ENCODE measurements at regions of chr14 and their contacts with region 1.

Region 1: GRCh38 chr14:69501423-69501838 is 16.9 kb downstream of the PLEKHD1 start:
- DNase-seq: no peak
- ATAC-seq: no peak
- H3K4me3 Mint-ChIP-seq: no peak overlapping the region
- H3K27ac Mint-ChIP-seq: no peak overlapping the region
- H3K4me1 Mint-ChIP-seq: peaks cover 13% of the 10 kb centered on the region
- H3K27me3 Mint-ChIP-seq: peaks cover 18% of the 10 kb centered on the region
- CTCF ChIP-seq: no peak

Region 2: GRCh38 chr14:69408331-69408960 is 93.0 kb before region 1 on chr14:
- CTCF ChIA-PET with region 1: no interaction called
- POLR2A ChIA-PET with region 1: no interaction called
- DNase-seq: no peak
- ATAC-seq: no peak
- H3K4me3 Mint-ChIP-seq: no peak overlapping the region
- H3K27ac Mint-ChIP-seq: no peak overlapping the region
- H3K4me1 Mint-ChIP-seq: no peaks in the 10 kb centered on the region
- H3K27me3 Mint-ChIP-seq: no peaks in the 10 kb centered on the region
- CTCF ChIP-seq: no peak

Region 3: GRCh38 chr14:69441948-69442347 is 59.5 kb before region 1 on chr14:
- CTCF ChIA-PET with region 1: no interaction called
- POLR2A ChIA-PET with region 1: no interaction called
- DNase-seq: no peak
- ATAC-seq: no peak
- H3K4me3 Mint-ChIP-seq: no peak overlapping the region
- H3K27ac Mint-ChIP-seq: peak overlapping the region; percentile 38
- H3K4me1 Mint-ChIP-seq: peaks cover 20% of the 10 kb centered on the region
- H3K27me3 Mint-ChIP-seq: no peaks in the 10 kb centered on the region
- CTCF ChIP-seq: no peak

Region 4: DNA sequence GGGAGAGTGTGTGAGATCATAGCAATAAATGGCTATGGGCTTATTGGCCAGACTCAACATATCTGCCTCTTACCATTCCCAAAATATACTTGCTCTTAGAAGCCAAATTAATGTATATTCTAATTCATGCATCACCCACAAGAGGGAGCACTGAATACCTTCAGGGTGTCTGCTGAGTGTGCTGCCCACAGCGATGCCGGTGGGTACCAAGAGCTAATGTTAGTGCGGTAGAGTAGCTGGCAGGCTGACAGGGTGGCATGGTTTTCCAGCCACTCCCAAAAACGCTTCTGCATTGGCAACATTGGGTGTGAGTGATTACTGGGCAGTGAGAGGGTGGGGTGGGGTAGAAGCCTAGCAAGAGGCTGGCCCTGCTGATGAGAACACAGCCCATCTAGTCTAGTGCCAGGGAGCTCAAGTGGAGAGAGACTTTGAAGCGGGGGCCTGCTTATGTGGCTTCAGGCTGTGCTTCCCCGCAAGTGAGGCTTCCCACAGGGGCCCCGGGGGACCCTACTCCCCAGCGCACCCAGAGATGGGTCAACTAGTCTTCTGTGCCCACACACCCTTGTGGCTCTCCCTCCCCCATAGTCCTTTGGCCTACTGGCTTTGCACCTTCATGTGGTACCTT is 26.1 kb before region 1 on chr14:
- CTCF ChIA-PET with region 1: interaction called, 19 read pairs
- POLR2A ChIA-PET with region 1: no interaction called
- DNase-seq: no peak
- ATAC-seq: peak; percentile 78
- H3K4me3 Mint-ChIP-seq: no peak overlapping the region
- H3K27ac Mint-ChIP-seq: no peak overlapping the region
- H3K4me1 Mint-ChIP-seq: no peaks in the 10 kb centered on the region
- H3K27me3 Mint-ChIP-seq: peaks cover 3% of the 10 kb centered on the region
- CTCF ChIP-seq: no peak; the same call in 1 of the 2 replicates

Region 5: DNA sequence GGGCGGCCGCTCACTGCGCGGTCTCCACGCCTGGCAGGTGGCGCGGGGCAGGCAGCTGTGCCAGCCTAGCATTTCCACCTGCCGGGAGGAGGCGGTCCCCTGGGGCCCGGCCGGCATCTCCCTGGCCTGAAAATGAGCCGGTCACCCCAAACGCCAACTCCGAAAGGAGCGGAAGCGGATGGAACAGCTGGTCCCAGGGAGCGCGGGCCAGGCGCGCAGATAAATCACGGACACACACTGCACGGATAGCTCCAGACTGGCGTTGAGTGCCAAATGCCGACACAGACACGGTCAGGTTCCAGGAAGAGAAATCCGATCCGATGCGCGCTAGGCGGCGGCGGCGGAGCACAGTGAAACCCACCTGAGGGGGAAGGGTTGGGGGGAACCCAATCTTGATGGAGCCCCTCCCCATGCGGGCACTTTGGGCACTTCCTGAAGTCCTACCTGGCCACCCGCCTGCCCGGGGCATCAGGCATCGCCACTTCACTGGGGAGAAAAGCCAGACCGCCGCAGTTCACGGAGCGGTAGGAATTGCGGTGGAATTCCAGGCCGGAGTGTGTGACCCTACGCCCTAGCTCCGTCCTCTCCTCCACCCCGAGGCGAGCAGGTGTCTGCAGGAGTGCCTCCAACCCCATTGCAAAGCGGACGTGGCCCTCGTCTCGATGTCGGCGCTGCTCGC is 17.5 kb before region 1 on chr14:
- CTCF ChIA-PET with region 1: interaction called, 12 read pairs
- POLR2A ChIA-PET with region 1: interaction called, 3 read pairs
- DNase-seq: peak; percentile 64
- ATAC-seq: peak; percentile 61
- H3K4me3 Mint-ChIP-seq: peak overlapping the region; percentile 74
- H3K27ac Mint-ChIP-seq: no peak overlapping the region
- H3K4me1 Mint-ChIP-seq: peaks cover 17% of the 10 kb centered on the region
- H3K27me3 Mint-ChIP-seq: peaks cover 56% of the 10 kb centered on the region
- CTCF ChIP-seq: no peak

Region 6: GRCh38 chr14:69519204-69520100 is 18.0 kb after region 1 on chr14:
- CTCF ChIA-PET with region 1: interaction called, 15 read pairs
- POLR2A ChIA-PET with region 1: no interaction called
- DNase-seq: no peak
- ATAC-seq: peak; percentile 20; the same call in 1 of the 2 replicates
- H3K4me3 Mint-ChIP-seq: no peak overlapping the region
- H3K27ac Mint-ChIP-seq: 0 out of 2 replicates have a peak overlapping the region, but pooled peaks have one; percentile 4
- H3K4me1 Mint-ChIP-seq: peaks cover 23% of the 10 kb centered on the region
- H3K27me3 Mint-ChIP-seq: no peaks in the 10 kb centered on the region
- CTCF ChIP-seq: no peak

Region 7: DNA sequence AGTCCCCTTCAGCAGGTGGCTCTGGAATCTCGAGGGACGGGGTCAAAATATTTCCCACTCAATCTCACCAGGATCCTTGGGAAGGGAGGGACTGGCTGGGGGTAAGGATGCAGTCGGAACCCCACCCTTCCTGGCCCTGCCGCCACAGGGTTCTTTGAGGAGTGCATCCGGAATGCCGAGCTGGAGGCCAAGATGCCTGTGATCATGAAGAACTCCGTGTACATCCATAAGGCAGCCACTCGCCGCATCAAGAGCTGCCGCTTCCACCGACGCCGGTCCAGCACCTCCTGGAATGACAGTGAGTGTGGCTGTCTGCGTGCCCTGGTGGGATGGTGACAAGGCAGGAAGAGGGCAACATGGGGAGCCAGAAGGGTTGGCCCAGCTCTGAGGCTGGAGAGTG is 26.2 kb after region 1 on chr14:
- CTCF ChIA-PET with region 1: interaction called, 17 read pairs
- POLR2A ChIA-PET with region 1: no interaction called
- DNase-seq: no peak
- ATAC-seq: no peak
- H3K4me3 Mint-ChIP-seq: no peak overlapping the region
- H3K27ac Mint-ChIP-seq: no peak overlapping the region
- H3K4me1 Mint-ChIP-seq: no peaks in the 10 kb centered on the region
- H3K27me3 Mint-ChIP-seq: no peaks in the 10 kb centered on the region; the same call in 1 of the 2 replicates
- CTCF ChIP-seq: no peak

Region 8: GRCh38 chr14:69535230-69535848 is 33.9 kb after region 1 on chr14:
- CTCF ChIA-PET with region 1: interaction called, 10 read pairs
- POLR2A ChIA-PET with region 1: no interaction called
- DNase-seq: peak; percentile 75
- ATAC-seq: peak; percentile 98
- H3K4me3 Mint-ChIP-seq: no peak overlapping the region
- H3K27ac Mint-ChIP-seq: no peak overlapping the region
- H3K4me1 Mint-ChIP-seq: 0 out of 2 replicates have a peak, but pooled peaks cover 7% of the 10 kb centered on the region
- H3K27me3 Mint-ChIP-seq: 0 out of 2 replicates have a peak, but pooled peaks cover 3% of the 10 kb centered on the region
- CTCF ChIP-seq: peak; percentile 29

Region 9: GRCh38 chr14:69559581-69560011 is 58.2 kb after region 1 on chr14:
- CTCF ChIA-PET with region 1: interaction called, 10 read pairs
- POLR2A ChIA-PET with region 1: no interaction called
- DNase-seq: no peak
- ATAC-seq: peak; percentile 55
- H3K4me3 Mint-ChIP-seq: no peak overlapping the region
- H3K27ac Mint-ChIP-seq: no peak overlapping the region
- H3K4me1 Mint-ChIP-seq: peaks cover 30% of the 10 kb centered on the region
- H3K27me3 Mint-ChIP-seq: no peaks in the 10 kb centered on the region; the same call in 1 of the 2 replicates
- CTCF ChIP-seq: no peak

Region 10: GRCh38 chr14:69629225-69630127 is 128.0 kb after region 1 on chr14:
- CTCF ChIA-PET with region 1: no interaction called
- POLR2A ChIA-PET with region 1: no interaction called
- DNase-seq: no peak
- ATAC-seq: no peak
- H3K4me3 Mint-ChIP-seq: no peak overlapping the region
- H3K27ac Mint-ChIP-seq: no peak overlapping the region
- H3K4me1 Mint-ChIP-seq: peaks cover 61% of the 10 kb centered on the region
- H3K27me3 Mint-ChIP-seq: no peaks in the 10 kb centered on the region
- CTCF ChIP-seq: no peak

Measured in WTC11 (cell line).